Endothelial cell of umbilical vein (primary cell): ENCODE measurements at regions of chr3 and their contacts with region 1.

Region 1: GRCh38 chr3:195259475-195260279 is 11.3 kb downstream of the XXYLT1 start:
- DNase-seq: peak; percentile 96
- H3K4me3 ChIP-seq: peak overlapping the region in 1 of 3 experiments; percentile 70
- H3K27ac ChIP-seq: peak overlapping the region; percentile 98
- H3K4me1 ChIP-seq: peaks cover 55% of the 10 kb centered on the region
- H3K27me3 ChIP-seq: no peaks in the 10 kb centered on the region
- CTCF ChIP-seq: peak; percentile 44 to 88
- POLR2A ChIP-seq: peak; percentile 38

Region 2: DNA sequence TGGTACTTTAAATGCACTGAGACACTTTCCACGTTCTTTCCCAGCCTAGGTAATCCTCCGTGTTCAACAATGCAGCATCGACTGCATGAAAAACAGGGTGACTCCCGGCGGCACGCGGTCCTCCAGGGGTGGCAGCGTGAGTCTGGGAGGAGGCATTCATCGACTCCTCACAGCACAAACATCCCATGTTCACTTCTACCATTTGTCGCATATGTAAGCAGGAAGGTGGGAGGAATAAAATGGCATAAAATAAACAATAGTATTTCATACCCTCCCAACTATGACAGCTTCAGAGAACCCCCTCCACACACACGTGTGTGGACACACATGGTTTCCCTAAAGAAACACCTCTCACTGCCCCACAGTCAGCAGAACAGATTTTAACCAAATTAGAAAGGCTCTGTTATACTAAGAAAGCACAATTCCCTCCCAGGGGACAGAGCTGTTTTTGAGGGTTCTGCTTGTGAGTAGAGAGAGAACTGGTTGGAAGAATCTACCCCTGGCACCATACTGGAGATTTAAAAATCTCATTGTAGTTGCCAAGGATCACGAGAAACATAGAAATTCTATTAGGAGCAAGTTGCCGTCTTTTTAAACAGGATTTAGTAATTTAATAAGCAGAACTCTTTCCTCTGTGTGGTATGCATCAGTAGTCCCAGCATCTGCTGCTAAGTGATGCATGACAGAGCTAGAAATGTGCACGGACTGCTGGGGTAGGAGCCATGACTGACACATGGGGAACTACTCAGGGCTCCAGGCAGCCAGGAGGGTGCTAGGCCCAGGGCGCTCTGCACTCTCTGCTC is 568.0 kb before region 1 on chr3:
- CTCF ChIA-PET with region 1: interaction called, 4 read pairs
- POLR2A ChIA-PET with region 1: interaction called, 3 read pairs
- dilution Hi-C with region 1: no loop called
- intact Hi-C with region 1: loop called (anchors 1 kb)
- DNase-seq: peak; percentile 68
- H3K4me3 ChIP-seq: no peak overlapping the region
- H3K27ac ChIP-seq: peak overlapping the region; percentile 39
- H3K4me1 ChIP-seq: peaks cover 19% of the 10 kb centered on the region
- H3K27me3 ChIP-seq: no peaks in the 10 kb centered on the region
- CTCF ChIP-seq: no peak
- POLR2A ChIP-seq: peak; percentile 76

Region 3: DNA sequence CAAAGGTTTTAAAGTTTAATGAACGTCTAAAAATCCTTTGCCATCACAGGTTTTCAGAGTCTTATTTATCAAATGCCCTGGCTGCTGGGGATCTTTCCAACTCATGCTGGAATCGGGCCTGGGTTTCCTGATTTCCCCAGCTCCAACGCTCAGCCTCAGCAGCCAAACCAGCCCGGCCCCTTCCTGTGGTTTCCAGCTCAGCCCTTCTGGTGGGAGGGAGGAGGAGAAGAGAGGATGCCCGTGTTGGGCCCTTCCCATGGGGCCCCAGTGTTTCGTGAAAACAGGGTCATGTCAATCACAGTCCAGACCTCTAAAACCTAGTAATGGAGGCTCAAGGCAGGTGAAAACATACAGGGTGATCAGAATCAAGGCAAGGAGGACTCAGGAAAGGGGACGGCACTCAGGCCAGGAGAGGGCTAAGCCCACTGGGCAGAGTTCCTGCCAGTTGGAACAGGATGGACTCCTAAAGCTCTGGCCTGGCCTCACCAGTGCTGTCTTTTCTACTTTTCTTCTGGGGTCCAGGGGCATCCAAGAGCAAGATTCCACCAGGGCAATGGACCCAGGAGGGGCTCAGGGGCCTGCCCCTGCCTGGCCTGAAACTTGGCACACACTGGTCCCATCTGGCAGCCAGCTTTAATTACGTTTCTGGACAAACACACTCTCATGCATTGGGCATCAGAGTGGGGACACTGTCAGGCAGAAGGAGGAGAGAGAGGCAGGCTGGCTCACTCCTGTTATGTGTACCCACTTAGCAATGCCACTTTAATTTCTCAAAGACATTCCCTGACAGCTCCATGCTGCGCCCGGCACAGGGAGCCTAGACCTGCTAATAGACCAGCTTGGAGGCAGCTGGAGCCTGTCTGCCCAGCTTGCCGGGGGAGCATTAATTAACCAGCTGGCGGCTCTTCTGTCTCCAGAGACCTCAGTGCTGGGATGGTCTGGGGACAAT is 379.4 kb before region 1 on chr3:
- CTCF ChIA-PET with region 1: no interaction called
- POLR2A ChIA-PET with region 1: no interaction called
- dilution Hi-C with region 1: no loop called
- intact Hi-C with region 1: loop called (anchors 5 kb)
- DNase-seq: peak; percentile 80
- H3K4me3 ChIP-seq: no peak overlapping the region
- H3K27ac ChIP-seq: peak overlapping the region; percentile 54
- H3K4me1 ChIP-seq: peaks cover 28% of the 10 kb centered on the region
- H3K27me3 ChIP-seq: no peaks in the 10 kb centered on the region
- CTCF ChIP-seq: no peak
- POLR2A ChIP-seq: no peak

Region 4: DNA sequence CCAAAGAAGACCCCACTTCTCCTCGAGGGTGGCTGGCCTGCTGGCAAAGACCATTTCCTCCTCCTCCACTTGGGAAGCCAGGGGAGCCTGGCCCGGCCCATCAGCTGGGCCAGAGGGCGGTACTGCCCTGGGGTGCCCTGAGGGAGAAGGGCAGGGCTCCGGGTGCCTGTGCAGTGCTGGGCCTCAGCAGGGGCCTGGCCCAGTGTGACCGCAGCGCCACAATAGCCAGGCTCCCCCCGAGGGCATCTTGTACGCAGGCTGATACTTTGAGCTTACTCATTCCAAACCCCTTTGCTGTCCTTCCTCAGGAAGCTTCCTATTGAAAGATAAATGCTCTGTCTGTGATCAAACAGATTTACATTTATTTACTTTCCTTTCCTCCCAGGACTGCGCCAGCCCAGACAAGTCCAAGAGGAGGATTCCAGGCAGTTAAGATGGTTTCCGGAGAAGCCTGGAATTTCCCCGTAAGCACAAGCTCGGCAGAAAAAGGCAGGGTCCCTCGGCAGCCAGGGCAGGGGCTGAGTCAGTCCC is 228.8 kb before region 1 on chr3:
- CTCF ChIA-PET with region 1: interaction called, 3 read pairs
- POLR2A ChIA-PET with region 1: no interaction called
- dilution Hi-C with region 1: no loop called
- intact Hi-C with region 1: loop called (anchors 1 kb)
- DNase-seq: peak; percentile 95
- H3K4me3 ChIP-seq: no peak overlapping the region
- H3K27ac ChIP-seq: peak overlapping the region; percentile 99
- H3K4me1 ChIP-seq: peaks cover 53% of the 10 kb centered on the region
- H3K27me3 ChIP-seq: no peaks in the 10 kb centered on the region
- CTCF ChIP-seq: no peak
- POLR2A ChIP-seq: peak; percentile 65

Region 5: GRCh38 chr3:195154793-195155535 is 104.7 kb before region 1 on chr3:
- CTCF ChIA-PET with region 1: interaction called, 6 read pairs
- POLR2A ChIA-PET with region 1: interaction called, 6 read pairs
- dilution Hi-C with region 1: loop called (anchors 5 kb)
- intact Hi-C with region 1: loop called (anchors 1 kb)
- DNase-seq: peak; percentile 100
- H3K4me3 ChIP-seq: no peak overlapping the region
- H3K27ac ChIP-seq: peak overlapping the region; percentile 95
- H3K4me1 ChIP-seq: peaks cover 86% of the 10 kb centered on the region
- H3K27me3 ChIP-seq: no peaks in the 10 kb centered on the region
- CTCF ChIP-seq: no peak
- POLR2A ChIP-seq: peak; percentile 80

Region 6: GRCh38 chr3:195226900-195227447 is 32.7 kb before region 1 on chr3:
- CTCF ChIA-PET with region 1: interaction called, 3 read pairs
- POLR2A ChIA-PET with region 1: no interaction called
- dilution Hi-C with region 1: no loop called
- intact Hi-C with region 1: loop called (anchors 1 kb)
- DNase-seq: peak; percentile 46
- H3K4me3 ChIP-seq: no peak overlapping the region
- H3K27ac ChIP-seq: no peak overlapping the region
- H3K4me1 ChIP-seq: peaks cover 28% of the 10 kb centered on the region
- H3K27me3 ChIP-seq: no peaks in the 10 kb centered on the region
- CTCF ChIP-seq: peak; percentile 44 to 63
- POLR2A ChIP-seq: no peak